ENCODE measurements at regions of chr4 and their contacts with region 1.

Region 1: DNA sequence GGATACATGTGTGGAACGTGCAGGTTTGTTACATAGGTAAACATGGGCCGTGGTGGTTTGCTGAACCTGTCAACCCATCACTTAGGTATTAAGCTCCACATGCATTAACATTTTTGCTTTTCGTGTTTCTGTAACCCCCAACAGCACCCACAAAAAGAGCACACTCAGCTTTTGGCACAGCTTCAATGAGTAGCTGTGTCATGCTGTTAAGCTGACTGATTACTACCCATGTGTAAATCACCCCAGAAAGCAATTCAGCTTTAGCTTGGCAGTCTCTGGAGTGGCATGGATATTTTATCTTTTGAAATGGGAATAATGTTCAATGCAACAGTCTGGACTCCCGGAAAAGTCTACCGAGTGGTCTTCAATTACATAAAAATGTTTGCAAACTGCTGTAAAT is 734.3 kb downstream of the STIM2 start:
- DNase-seq: no peak
- H3K4me3 ChIP-seq: no peak overlapping the region
- H3K27ac ChIP-seq: no peak overlapping the region
- H3K4me1 ChIP-seq: no peaks in the 10 kb centered on the region
- H3K27me3 ChIP-seq: no peaks in the 10 kb centered on the region
- CTCF ChIP-seq: no peak
- POLR2A ChIP-seq: no peak

Region 2: DNA sequence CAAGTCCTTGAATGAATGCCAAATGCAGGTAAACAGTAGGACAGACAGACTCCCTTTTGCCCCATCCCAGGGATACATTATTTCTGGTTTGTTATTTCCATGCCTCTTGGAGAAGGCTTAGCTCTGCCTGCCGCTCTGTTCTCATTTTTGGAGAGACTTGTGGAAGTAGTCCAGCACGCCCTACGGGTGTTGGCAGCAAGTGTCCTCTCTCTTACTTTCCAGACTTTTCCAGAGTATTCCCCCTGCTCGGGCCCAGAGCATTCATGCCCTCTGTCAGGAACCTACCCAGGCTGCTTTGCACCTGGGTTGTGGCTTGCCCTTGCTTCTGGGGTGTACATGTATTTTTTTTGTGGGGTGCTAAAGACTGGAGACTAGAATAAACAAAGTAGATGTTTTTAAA is 1923.9 kb before region 1 on chr4:
- intact Hi-C with region 1: loop called (anchors 10 kb)
- DNase-seq: no peak
- H3K4me3 ChIP-seq: no peak overlapping the region
- H3K27ac ChIP-seq: no peak overlapping the region
- H3K4me1 ChIP-seq: no peaks in the 10 kb centered on the region
- H3K27me3 ChIP-seq: no peaks in the 10 kb centered on the region
- CTCF ChIP-seq: no peak
- POLR2A ChIP-seq: no peak

Region 3: GRCh38 chr4:25993395-25994185 is 1601.3 kb before region 1 on chr4:
- intact Hi-C with region 1: no loop called
- DNase-seq: no peak
- H3K4me3 ChIP-seq: no peak overlapping the region
- H3K27ac ChIP-seq: no peak overlapping the region
- H3K4me1 ChIP-seq: no peaks in the 10 kb centered on the region
- H3K27me3 ChIP-seq: no peaks in the 10 kb centered on the region
- CTCF ChIP-seq: no peak
- POLR2A ChIP-seq: no peak

Region 4: GRCh38 chr4:27084685-27085361 is 510.1 kb before region 1 on chr4:
- intact Hi-C with region 1: no loop called
- DNase-seq: no peak
- H3K4me3 ChIP-seq: peak overlapping the region; percentile 7 to 39 (median 19)
- H3K27ac ChIP-seq: no peak overlapping the region
- H3K4me1 ChIP-seq: no peaks in the 10 kb centered on the region
- H3K27me3 ChIP-seq: peaks cover 0 to 31% of the 10 kb centered on the region in 2 donors
- CTCF ChIP-seq: no peak
- POLR2A ChIP-seq: no peak

Region 5: GRCh38 chr4:27775156-27775555 is 180.2 kb after region 1 on chr4:
- intact Hi-C with region 1: no loop called
- DNase-seq: no peak
- H3K4me3 ChIP-seq: no peak overlapping the region
- H3K27ac ChIP-seq: no peak overlapping the region
- H3K4me1 ChIP-seq: no peaks in the 10 kb centered on the region
- H3K27me3 ChIP-seq: no peaks in the 10 kb centered on the region
- CTCF ChIP-seq: no peak
- POLR2A ChIP-seq: no peak

Region 6: GRCh38 chr4:27986476-27986875 is 391.6 kb after region 1 on chr4:
- intact Hi-C with region 1: no loop called
- DNase-seq: no peak
- H3K4me3 ChIP-seq: no peak overlapping the region
- H3K27ac ChIP-seq: no peak overlapping the region
- H3K4me1 ChIP-seq: no peaks in the 10 kb centered on the region
- H3K27me3 ChIP-seq: no peaks in the 10 kb centered on the region
- CTCF ChIP-seq: no peak
- POLR2A ChIP-seq: no peak

Region 7: DNA sequence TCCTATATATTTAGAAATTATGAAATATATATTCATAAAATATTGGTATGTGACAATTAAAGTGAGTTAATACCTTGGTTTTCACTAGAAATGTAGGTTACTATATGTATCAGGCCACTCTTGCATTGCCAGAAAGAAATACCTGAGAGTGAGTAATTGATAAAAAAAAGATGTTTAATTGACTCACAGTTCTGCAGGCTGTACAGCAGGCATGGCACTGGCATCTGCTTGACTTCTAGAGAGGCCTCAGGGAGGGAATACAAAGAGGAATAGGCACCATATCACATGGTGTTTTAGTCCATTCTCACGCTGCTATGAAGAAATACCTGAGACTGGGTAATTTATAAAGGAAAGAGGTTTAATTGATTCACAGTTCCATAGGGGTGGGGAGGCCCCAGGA is 826.3 kb after region 1 on chr4:
- intact Hi-C with region 1: loop called (anchors 5 kb)
- DNase-seq: no peak
- H3K4me3 ChIP-seq: no peak overlapping the region
- H3K27ac ChIP-seq: no peak overlapping the region
- H3K4me1 ChIP-seq: no peaks in the 10 kb centered on the region
- H3K27me3 ChIP-seq: no peaks in the 10 kb centered on the region
- CTCF ChIP-seq: no peak
- POLR2A ChIP-seq: no peak

Measured in breast epithelium (tissue), 4 donors.